ENCODE measurements at regions of chr12 and their contacts with region 1.

Region 1: GRCh38 chr12:9813821-9814809 is 13.2 kb upstream of the KLRF1 start:
- DNase-seq: peak; percentile 88 to 95 (median 92)
- ATAC-seq: peak; percentile 97
- H3K4me3 ChIP-seq: peak overlapping the region; percentile 59
- H3K4me3 Mint-ChIP-seq: peak overlapping the region; percentile 89
- H3K27ac ChIP-seq: peak overlapping the region in 1 of 2 donors; percentile 31
- H3K27ac Mint-ChIP-seq: peak overlapping the region; percentile 92
- H3K4me1 ChIP-seq: peaks cover 12% of the 10 kb centered on the region
- H3K4me1 Mint-ChIP-seq: peaks cover 10% of the 10 kb centered on the region
- H3K27me3 ChIP-seq: peaks cover 0 to 2% of the 10 kb centered on the region in 2 experiments
- H3K27me3 Mint-ChIP-seq: no peaks in the 10 kb centered on the region
- CTCF ChIP-seq: peak; percentile 92

Region 2: GRCh38 chr12:9509464-9510166 is 304.5 kb before region 1 on chr12:
- CTCF ChIA-PET with region 1: no interaction called
- POLR2A ChIA-PET with region 1: no interaction called
- intact Hi-C with region 1: no loop called
- DNase-seq: no peak
- ATAC-seq: no peak
- H3K4me3 ChIP-seq: no peak overlapping the region
- H3K4me3 Mint-ChIP-seq: no peak overlapping the region
- H3K27ac ChIP-seq: no peak overlapping the region
- H3K27ac Mint-ChIP-seq: peak overlapping the region; percentile 45
- H3K4me1 ChIP-seq: no peaks in the 10 kb centered on the region
- H3K4me1 Mint-ChIP-seq: peaks cover 12% of the 10 kb centered on the region
- H3K27me3 ChIP-seq: no peaks in the 10 kb centered on the region
- H3K27me3 Mint-ChIP-seq: no peaks in the 10 kb centered on the region
- CTCF ChIP-seq: no peak

Region 3: GRCh38 chr12:9750276-9751203 is 63.6 kb before region 1 on chr12:
- CTCF ChIA-PET with region 1: interaction called, 40 read pairs
- POLR2A ChIA-PET with region 1: interaction called, 34 read pairs
- intact Hi-C with region 1: no loop called
- DNase-seq: peak in 13 of 14 experiments; percentile 13 to 87 (median 44)
- ATAC-seq: peak; percentile 48
- H3K4me3 ChIP-seq: peak overlapping the region; percentile 10
- H3K4me3 Mint-ChIP-seq: peak overlapping the region; percentile 63
- H3K27ac ChIP-seq: no peak overlapping the region
- H3K27ac Mint-ChIP-seq: peak overlapping the region; percentile 80
- H3K4me1 ChIP-seq: peaks cover 14% of the 10 kb centered on the region
- H3K4me1 Mint-ChIP-seq: peaks cover 54% of the 10 kb centered on the region
- H3K27me3 ChIP-seq: no peaks in the 10 kb centered on the region
- H3K27me3 Mint-ChIP-seq: no peaks in the 10 kb centered on the region
- CTCF ChIP-seq: peak; percentile 86

Region 4: DNA sequence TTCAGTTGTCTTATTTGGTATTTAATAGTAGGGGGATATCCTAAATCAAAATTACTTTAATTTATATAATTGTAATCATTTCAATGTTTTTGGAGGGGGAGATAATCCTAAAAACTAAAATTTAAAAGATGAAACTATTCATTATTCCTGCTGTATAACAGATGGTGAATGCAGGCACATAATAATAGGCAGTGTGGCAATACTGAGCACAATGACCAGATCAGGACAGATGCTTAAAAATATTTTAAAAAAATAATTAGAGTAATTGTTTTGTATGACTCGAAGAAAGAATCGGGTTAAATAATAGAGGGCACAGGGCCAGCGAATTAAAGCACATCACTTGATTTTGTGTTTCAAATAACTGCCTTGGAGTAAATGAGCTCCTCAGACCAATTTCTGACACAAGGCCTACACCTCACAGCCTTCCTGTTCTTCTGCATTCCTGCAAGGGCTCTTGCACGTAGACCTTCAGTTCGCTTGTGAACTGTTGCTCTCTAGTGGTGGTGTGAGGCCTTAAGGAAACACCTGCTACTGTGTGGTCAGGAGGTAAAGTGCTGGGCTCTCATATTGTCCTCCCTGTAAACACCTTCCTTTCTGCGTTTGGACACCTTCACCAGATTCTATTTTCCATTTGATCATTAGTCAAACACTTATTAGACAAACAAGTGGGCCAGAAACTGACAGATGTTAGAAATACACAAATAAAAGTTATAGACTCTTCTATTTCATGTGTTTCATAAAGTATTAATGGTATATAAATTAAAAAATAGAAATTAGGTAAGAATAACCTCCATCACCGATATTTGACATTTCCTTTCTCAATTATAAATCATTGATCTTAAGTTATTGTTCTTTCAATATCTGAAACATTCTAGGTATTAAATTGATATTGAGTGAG is 16.1 kb before region 1 on chr12:
- CTCF ChIA-PET with region 1: interaction called, 18 read pairs
- POLR2A ChIA-PET with region 1: interaction called, 5 read pairs
- intact Hi-C with region 1: no loop called
- DNase-seq: peak; percentile 40 to 91 (median 56)
- ATAC-seq: peak; percentile 95
- H3K4me3 ChIP-seq: no peak overlapping the region
- H3K4me3 Mint-ChIP-seq: peak overlapping the region; percentile 52
- H3K27ac ChIP-seq: peak overlapping the region in 1 of 2 donors; percentile 42
- H3K27ac Mint-ChIP-seq: peak overlapping the region; percentile 5
- H3K4me1 ChIP-seq: peaks cover 19% of the 10 kb centered on the region
- H3K4me1 Mint-ChIP-seq: peaks cover 51% of the 10 kb centered on the region
- H3K27me3 ChIP-seq: no peaks in the 10 kb centered on the region
- H3K27me3 Mint-ChIP-seq: no peaks in the 10 kb centered on the region
- CTCF ChIP-seq: peak; percentile 91

Region 5: GRCh38 chr12:9906873-9907272 is 92.8 kb after region 1 on chr12:
- CTCF ChIA-PET with region 1: interaction called, 10 read pairs
- POLR2A ChIA-PET with region 1: no interaction called
- intact Hi-C with region 1: no loop called
- DNase-seq: peak in 9 of 14 experiments; percentile 2 to 86 (median 19)
- ATAC-seq: peak; percentile 96
- H3K4me3 ChIP-seq: no peak overlapping the region
- H3K4me3 Mint-ChIP-seq: peak overlapping the region; percentile 54
- H3K27ac ChIP-seq: no peak overlapping the region
- H3K27ac Mint-ChIP-seq: peak overlapping the region; percentile 68
- H3K4me1 ChIP-seq: peaks cover 12% of the 10 kb centered on the region
- H3K4me1 Mint-ChIP-seq: peaks cover 32% of the 10 kb centered on the region
- H3K27me3 ChIP-seq: no peaks in the 10 kb centered on the region
- H3K27me3 Mint-ChIP-seq: no peaks in the 10 kb centered on the region
- CTCF ChIP-seq: no peak

Region 6: DNA sequence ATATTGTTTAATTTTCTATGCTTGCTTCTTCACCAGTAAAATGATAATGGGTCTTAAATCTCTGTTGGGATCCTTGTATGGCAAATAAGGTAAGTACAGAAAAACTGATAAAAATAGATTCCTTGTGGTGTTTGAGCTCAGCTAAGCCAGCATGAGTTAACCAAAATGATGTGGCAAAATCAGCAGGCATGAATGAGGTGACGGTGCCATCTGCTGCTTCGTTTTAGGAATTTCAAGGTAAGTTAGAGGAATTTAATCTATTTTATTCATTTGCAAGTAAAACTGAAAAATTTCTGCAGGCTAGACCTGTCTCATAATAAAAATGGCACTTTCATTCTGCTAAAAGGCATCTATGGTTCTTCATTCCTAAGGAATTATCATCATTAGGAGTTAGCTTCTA is 325.9 kb after region 1 on chr12:
- CTCF ChIA-PET with region 1: interaction called, 3 read pairs
- POLR2A ChIA-PET with region 1: no interaction called
- intact Hi-C with region 1: loop called (anchors 1 to 5 kb)
- DNase-seq: peak in 13 of 14 experiments; percentile 10 to 74 (median 22)
- ATAC-seq: peak; percentile 60
- H3K4me3 ChIP-seq: no peak overlapping the region
- H3K4me3 Mint-ChIP-seq: no peak overlapping the region
- H3K27ac ChIP-seq: no peak overlapping the region
- H3K27ac Mint-ChIP-seq: no peak overlapping the region
- H3K4me1 ChIP-seq: no peaks in the 10 kb centered on the region
- H3K4me1 Mint-ChIP-seq: no peaks in the 10 kb centered on the region
- H3K27me3 ChIP-seq: peaks cover 0 to 4% of the 10 kb centered on the region in 2 experiments
- H3K27me3 Mint-ChIP-seq: peaks cover 4% of the 10 kb centered on the region
- CTCF ChIP-seq: peak; percentile 18